Naive thymus-derived CD4-positive, alpha-beta T cell (primary cell): ENCODE measurements at regions of chr12 and their contacts with region 1.

Region 1: DNA sequence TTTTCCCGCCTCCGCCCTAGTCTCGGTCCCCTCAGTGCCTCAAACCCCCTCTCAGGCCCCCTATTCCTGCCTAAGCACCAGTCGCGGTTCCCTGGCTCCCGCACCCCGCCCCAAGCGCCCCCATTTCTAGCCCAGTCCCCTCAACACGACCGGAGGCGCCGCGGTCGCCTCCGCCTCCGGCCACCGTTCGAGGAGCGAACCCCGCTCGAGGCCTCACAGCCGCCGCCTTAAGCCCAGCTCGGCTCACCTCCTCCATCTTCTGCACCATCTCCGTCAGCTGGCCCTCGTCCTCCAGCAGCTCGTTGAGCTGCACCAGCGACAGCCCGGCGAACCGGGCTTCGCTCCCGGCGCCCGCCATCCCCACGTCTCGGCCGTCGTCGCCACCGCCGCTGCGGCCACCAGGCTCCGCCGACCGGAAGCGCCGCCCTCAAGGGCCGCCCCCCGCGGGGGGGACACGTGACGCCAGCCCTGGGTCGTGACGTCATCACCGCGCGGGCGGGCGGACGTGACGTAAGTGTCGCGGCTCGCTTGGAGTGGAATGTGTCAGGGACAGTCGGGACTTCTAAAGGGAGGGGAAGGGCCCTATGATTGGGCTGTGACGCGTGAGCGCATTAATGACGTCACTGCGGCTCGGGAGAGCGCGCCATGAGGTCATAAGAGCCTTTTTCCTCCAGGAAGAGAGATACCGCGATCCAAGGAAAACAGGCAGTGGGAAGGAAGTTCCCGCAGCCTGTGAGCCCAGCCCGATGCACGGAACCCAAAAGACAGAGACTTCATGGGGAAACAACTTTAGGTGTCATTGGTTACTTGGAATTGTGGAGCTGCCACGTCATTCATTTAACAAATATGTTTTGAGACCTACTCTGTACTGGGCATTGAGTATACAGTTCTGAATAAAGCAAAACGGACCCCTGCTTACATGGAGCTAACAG is at the start of gene VPS37B:
- DNase-seq: peak; percentile 91 to 97 (median 94)
- ATAC-seq: peak; percentile 85
- H3K4me3 ChIP-seq: peak within 1 kb of the TSS; percentile 82
- H3K4me3 Mint-ChIP-seq: peak within 1 kb of the TSS; percentile 86 to 99 (median 95)
- H3K27ac ChIP-seq: peak within 1 kb of the TSS; percentile 97
- H3K27ac Mint-ChIP-seq: peak within 1 kb of the TSS; percentile 72 to 100 (median 99)
- H3K4me1 ChIP-seq: peaks cover 59 to 75% of the 10 kb centered on the region in 2 donors
- H3K4me1 Mint-ChIP-seq: peaks cover 67 to 96% (median 87%) of the 10 kb centered on the region in 7 donors
- H3K27me3 ChIP-seq: no peaks in the 10 kb centered on the region
- H3K27me3 Mint-ChIP-seq: peaks cover 0 to 13% (median 0%) of the 10 kb centered on the region in 5 donors
- total RNA-seq, gene VPS37B: 25.3 to 101 (median 30.1) TPM

Region 2: GRCh38 chr12:122860346-122861090 is 35.5 kb before region 1 on chr12:
- CTCF ChIA-PET with region 1: interaction called, 11 read pairs
- POLR2A ChIA-PET with region 1: interaction called, 8 read pairs
- intact Hi-C with region 1: loop called (anchors 2 to 5 kb)
- DNase-seq: peak; percentile 65 to 83 (median 75)
- ATAC-seq: peak; percentile 70
- H3K4me3 ChIP-seq: no peak overlapping the region
- H3K4me3 Mint-ChIP-seq: no peak overlapping the region
- H3K27ac ChIP-seq: no peak overlapping the region
- H3K27ac Mint-ChIP-seq: peak overlapping the region in 4 of 9 donors; percentile 33 to 65 (median 59)
- H3K4me1 ChIP-seq: no peaks in the 10 kb centered on the region
- H3K4me1 Mint-ChIP-seq: peaks cover 0 to 8% (median 0%) of the 10 kb centered on the region in 7 donors
- H3K27me3 ChIP-seq: no peaks in the 10 kb centered on the region
- H3K27me3 Mint-ChIP-seq: no peaks in the 10 kb centered on the region

Region 3: DNA sequence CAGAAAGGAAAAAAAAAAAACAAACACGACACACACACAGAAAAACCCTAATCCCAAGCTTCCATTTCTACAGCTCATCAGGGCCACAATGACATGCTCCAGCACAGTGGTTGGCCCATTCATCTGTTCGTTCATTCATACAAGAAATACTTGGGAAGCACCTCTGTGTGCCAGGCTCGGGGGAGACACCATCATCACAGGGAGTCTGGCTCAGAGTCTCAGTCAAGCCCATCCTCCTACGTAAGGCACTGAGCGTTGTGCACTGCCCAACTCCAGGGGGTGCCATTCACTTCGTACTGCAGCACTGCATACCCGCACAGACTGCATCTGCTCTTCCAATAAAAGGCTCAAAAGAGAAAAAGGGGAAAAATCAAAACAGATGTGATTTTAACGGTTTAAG is 15.3 kb before region 1 on chr12:
- CTCF ChIA-PET with region 1: interaction called, 5 read pairs
- POLR2A ChIA-PET with region 1: interaction called, 66 read pairs
- intact Hi-C with region 1: no loop called
- DNase-seq: peak in 1 of 9 donors; percentile 20
- ATAC-seq: peak; percentile 68
- H3K4me3 ChIP-seq: no peak overlapping the region
- H3K4me3 Mint-ChIP-seq: peak overlapping the region in 4 of 10 donors; percentile 2 to 52 (median 36)
- H3K27ac ChIP-seq: peak overlapping the region; percentile 9
- H3K27ac Mint-ChIP-seq: peak overlapping the region in 8 of 9 donors; percentile 49 to 83 (median 67)
- H3K4me1 ChIP-seq: peaks cover 48 to 49% of the 10 kb centered on the region in 2 donors
- H3K4me1 Mint-ChIP-seq: peaks cover 63 to 97% (median 91%) of the 10 kb centered on the region in 7 donors
- H3K27me3 ChIP-seq: no peaks in the 10 kb centered on the region
- H3K27me3 Mint-ChIP-seq: peaks cover 0 to 26% (median 0%) of the 10 kb centered on the region in 5 donors

Region 4: DNA sequence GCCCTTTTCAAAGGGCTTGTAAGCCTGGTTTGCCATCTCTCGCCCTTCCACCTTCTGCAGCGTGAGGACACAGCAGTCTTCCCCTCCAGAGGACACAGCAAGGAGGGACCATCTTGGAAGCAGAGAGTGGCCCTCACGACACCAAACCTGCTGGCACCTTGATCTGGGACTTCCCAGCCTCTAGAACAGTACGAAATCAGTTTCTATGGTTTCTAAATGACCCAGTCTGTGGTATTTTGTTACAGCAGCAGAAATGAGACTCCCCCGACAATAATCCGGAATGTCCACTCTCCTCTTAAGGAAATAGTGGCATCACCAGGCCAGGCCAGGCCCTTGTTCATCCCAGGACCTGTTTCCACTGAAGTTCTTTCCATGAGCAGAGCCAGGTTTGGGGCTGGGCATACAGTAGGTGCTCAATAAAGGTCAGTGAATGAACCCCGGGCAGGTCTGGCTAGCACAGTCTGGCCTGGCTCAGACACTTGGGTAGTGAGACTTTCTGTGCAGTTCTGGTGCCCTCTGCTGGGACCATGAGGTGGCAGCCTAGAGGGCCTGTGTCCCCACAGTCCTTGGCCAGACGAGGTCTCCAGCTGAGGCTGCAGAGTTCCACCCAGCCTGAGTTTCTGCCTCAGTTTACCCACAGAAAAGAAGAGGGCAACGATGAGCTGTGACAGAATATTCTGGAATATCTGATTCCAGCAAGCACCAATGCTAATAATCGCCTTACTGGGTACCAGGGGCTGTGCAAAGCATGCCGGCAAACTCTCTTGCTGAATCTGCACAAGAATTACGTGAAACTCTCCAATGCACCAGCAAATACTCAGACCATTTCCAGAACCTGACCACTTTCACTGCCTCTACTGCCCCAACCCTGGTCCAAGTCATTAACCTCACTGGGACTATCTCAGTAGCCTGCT is 56.3 kb after region 1 on chr12:
- CTCF ChIA-PET with region 1: no interaction called
- POLR2A ChIA-PET with region 1: interaction called, 3 read pairs
- intact Hi-C with region 1: loop called (anchors 1 to 2 kb)
- DNase-seq: peak; percentile 53 to 73 (median 68)
- ATAC-seq: peak; percentile 94
- H3K4me3 ChIP-seq: no peak overlapping the region
- H3K4me3 Mint-ChIP-seq: no peak overlapping the region
- H3K27ac ChIP-seq: no peak overlapping the region
- H3K27ac Mint-ChIP-seq: peak overlapping the region in 4 of 9 donors; percentile 22 to 51 (median 35)
- H3K4me1 ChIP-seq: peaks cover 0 to under 1% of the 10 kb centered on the region in 2 donors
- H3K4me1 Mint-ChIP-seq: peaks cover 0 to 15% (median 5%) of the 10 kb centered on the region in 7 donors
- H3K27me3 ChIP-seq: no peaks in the 10 kb centered on the region
- H3K27me3 Mint-ChIP-seq: no peaks in the 10 kb centered on the region

Region 5: GRCh38 chr12:122974274-122974891 is 78.4 kb after region 1 on chr12:
- CTCF ChIA-PET with region 1: interaction called, 4 read pairs
- POLR2A ChIA-PET with region 1: interaction called, 13 read pairs
- intact Hi-C with region 1: loop called (anchors 1 to 2 kb)
- DNase-seq: peak; percentile 92 to 98 (median 98)
- ATAC-seq: peak; percentile 92
- H3K4me3 ChIP-seq: peak overlapping the region; percentile 100
- H3K4me3 Mint-ChIP-seq: peak overlapping the region; percentile 92 to 99 (median 97)
- H3K27ac ChIP-seq: peak overlapping the region; percentile 98
- H3K27ac Mint-ChIP-seq: peak overlapping the region; percentile 99 to 100 (median 99)
- H3K4me1 ChIP-seq: peaks cover 18 to 23% of the 10 kb centered on the region in 2 donors
- H3K4me1 Mint-ChIP-seq: peaks cover 17 to 39% (median 30%) of the 10 kb centered on the region in 7 donors
- H3K27me3 ChIP-seq: no peaks in the 10 kb centered on the region
- H3K27me3 Mint-ChIP-seq: peaks cover 0 to 3% (median 0%) of the 10 kb centered on the region in 5 donors